Activated CD4-positive, alpha-beta T cell treated with anti-CD3 and anti-CD28 coated beads for 36 hours (primary cell): ENCODE measurements at regions of chr10 and their contacts with region 1.

Region 1: DNA sequence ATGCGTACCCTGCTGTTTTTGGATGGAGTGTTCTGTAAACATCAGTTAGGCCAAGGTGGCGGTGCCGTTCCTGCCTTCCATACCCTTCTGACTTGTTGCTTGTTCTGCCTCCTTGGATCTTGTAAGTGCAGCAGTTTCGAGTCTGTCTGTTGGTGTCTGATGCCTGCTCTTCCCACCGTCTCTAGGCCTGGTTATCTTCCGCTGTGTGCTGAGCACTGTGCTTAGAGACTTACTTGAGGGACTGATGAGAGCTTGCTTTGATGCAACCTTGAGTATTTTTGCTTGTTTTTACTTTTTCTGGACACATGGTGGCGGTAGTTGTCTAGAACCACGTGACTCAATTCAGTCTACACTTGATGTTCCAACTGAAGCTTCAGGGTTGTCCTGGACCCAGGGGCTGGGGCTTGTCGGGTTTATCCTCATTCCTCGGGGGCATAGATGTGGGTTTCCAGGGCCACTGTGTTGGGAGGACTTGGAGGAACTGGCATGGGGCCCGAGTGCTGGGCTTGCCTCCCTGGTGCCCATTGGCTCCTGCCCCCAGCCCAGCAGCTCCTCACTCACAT is 14.4 kb upstream of the SPRN start:
- DNase-seq: no peak
- ATAC-seq: peak; percentile 59
- H3K4me3 Mint-ChIP-seq: no peak overlapping the region
- H3K27ac Mint-ChIP-seq: no peak overlapping the region
- H3K4me1 Mint-ChIP-seq: peaks cover 17% of the 10 kb centered on the region
- H3K27me3 Mint-ChIP-seq: peaks cover 10% of the 10 kb centered on the region

Region 2: DNA sequence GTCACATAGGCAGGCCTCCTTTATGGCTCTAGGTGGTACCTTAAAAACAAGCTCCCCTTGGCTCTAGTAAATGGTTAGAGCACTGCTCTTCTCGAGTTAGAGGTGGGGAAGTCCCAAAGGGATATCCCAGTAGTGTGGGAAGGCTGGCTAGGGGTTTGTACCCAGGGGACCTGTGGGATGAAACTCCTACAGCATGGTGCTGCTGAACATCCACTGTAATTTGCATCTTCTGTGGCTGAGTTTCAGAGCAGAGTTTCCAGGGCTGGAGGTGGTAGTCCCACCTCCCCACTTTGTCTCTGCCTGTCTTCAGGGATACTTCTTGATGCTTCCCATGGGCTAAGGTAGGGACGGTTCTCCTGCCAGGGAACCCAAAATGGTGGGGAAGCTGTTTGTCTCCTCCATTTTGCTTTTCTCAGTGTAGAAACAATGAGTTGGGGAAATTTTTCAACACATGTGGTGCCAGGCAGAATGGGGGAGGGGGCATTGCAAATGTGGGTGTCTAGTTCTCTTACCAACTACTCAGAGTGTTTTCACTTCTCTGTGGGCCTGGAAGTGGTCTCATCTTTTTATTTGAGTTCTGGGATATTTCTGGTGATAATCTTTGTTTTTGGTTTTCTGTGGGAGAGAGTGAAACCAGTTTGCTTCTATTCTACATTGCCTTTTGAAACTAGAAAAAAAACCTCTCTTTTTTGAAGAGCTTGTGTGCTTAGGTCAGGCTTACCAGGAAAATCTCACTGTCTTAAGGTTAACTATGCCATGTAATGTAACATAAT is 51.2 kb after region 1 on chr10:
- CTCF ChIA-PET with region 1: interaction called, 11 read pairs
- POLR2A ChIA-PET with region 1: interaction called, 5 read pairs
- intact Hi-C with region 1: loop called in 1 of 2 experiments (anchors 5 kb)
- DNase-seq: peak; percentile 38
- ATAC-seq: peak; percentile 30
- H3K4me3 Mint-ChIP-seq: no peak overlapping the region
- H3K27ac Mint-ChIP-seq: no peak overlapping the region
- H3K4me1 Mint-ChIP-seq: peaks cover 10% of the 10 kb centered on the region
- H3K27me3 Mint-ChIP-seq: peaks cover under 1% of the 10 kb centered on the region

Region 3: DNA sequence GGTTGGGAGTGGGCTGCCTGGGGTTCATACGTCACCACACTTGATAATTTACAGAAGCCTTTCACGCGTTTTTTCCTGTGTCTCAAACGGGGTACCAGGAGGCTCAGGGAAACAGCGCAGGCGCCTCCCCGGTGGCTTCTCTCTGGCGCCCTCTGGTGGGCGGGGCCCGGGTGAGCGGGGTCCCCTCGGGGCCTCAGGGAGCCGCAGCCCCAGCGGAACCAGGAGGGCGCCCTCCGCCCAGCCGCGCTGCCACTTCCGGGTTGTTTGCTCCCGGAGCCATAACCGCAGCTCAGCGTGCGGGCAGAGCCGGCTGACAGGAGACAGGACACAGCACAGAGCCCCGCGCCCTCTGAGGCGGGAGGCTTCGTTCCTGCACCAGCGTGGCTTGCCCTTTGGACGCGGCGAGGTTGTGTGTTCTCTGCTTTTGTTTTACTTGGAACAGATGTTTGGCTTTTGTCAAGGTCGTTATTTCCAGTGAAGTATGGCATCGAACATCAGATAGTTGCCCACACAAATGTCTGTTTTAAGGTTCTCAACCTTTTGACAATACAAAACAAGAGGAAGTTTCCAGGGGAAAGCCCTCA is 81.5 kb after region 1 on chr10:
- CTCF ChIA-PET with region 1: interaction called, 28 read pairs
- POLR2A ChIA-PET with region 1: no interaction called
- intact Hi-C with region 1: loop called (anchors 1 to 2 kb)
- DNase-seq: peak; percentile 96
- ATAC-seq: peak; percentile 99
- H3K4me3 Mint-ChIP-seq: peak overlapping the region; percentile 66
- H3K27ac Mint-ChIP-seq: peak overlapping the region; percentile 11
- H3K4me1 Mint-ChIP-seq: peaks cover 10% of the 10 kb centered on the region
- H3K27me3 Mint-ChIP-seq: peaks cover 5% of the 10 kb centered on the region